ENCODE measurements at regions of chrX and their contacts with region 1.

Region 1: DNA sequence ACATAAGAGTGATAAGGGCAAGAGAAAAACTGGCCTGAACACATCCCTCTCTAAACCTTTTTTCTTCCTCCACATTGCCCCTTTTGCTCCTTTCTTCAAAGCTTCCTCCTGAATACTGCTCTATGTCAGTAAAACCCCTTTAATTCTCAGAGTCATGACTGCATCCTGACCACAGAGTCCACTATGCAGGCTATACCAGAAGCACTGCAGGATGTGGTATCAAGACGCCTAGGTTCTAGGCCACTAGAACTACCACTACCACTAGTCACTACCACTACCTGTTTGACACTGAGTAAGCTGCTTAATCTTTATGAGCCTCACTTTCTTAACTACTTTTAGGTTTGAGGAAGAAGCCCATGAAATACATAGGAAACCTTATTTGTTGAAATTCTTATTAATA is 38.7 kb downstream of the ARHGEF9 start:
- DNase-seq: no peak
- H3K4me3 ChIP-seq: no peak overlapping the region
- H3K27ac ChIP-seq: no peak overlapping the region
- H3K4me1 ChIP-seq: no peaks in the 10 kb centered on the region
- H3K27me3 ChIP-seq: no peaks in the 10 kb centered on the region
- CTCF ChIP-seq: no peak

Region 2: DNA sequence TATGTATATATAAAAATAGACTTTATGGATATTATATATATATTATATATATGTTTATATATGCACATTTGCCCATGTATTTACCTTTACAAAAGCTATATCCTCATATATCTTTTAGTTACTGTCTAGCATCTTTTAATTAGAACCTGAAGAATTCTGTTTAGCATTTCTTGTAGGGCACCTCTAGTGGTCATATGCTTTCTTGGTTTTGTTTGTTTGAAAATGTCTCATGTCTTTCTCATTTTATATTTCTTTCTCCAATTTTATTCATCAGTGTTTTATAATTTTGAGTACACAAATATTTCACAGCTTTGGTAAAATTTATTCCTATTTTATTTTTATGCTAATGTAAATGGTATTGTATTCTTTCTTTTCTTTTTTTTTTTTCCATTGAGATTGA is 324.9 kb before region 1 on chrX:
- CTCF ChIA-PET with region 1: interaction called, 17 read pairs
- POLR2A ChIA-PET with region 1: no interaction called
- intact Hi-C with region 1: no loop called
- DNase-seq: no peak
- H3K4me3 ChIP-seq: no peak overlapping the region
- H3K27ac ChIP-seq: no peak overlapping the region
- H3K4me1 ChIP-seq: peaks cover 17% of the 10 kb centered on the region
- H3K27me3 ChIP-seq: no peaks in the 10 kb centered on the region
- CTCF ChIP-seq: no peak; the same call in 1 of the 2 replicates

Measured in PC-9 (cell line).